ENCODE measurements at regions of chr3 and their contacts with region 1.

Region 1: GRCh38 chr3:127970966-127971592 is 56.0 kb downstream of the KBTBD12 start:
- ATAC-seq: peak; percentile 86 to 98 (median 94)
- H3K4me3 ChIP-seq: no peak overlapping the region
- H3K27ac ChIP-seq: no peak overlapping the region
- H3K4me1 ChIP-seq: no peaks in the 10 kb centered on the region

Region 2: GRCh38 chr3:127590593-127591477 is 380.2 kb before region 1 on chr3 and contains the start of gene TPRA1:
- in situ Hi-C with region 1: loop called in 1 of 9 experiments (anchors 25 kb)
- ATAC-seq: peak; percentile 70 to 87 (median 82)
- H3K4me3 ChIP-seq: peak within 1 kb of the TSS; percentile 57 to 83 (median 76)
- H3K27ac ChIP-seq: peak within 1 kb of the TSS; percentile 84 to 90
- H3K4me1 ChIP-seq: peaks cover 8 to 16% of the 10 kb centered on the region in 2 donors
- total RNA-seq, gene TPRA1: 16.2 to 59.1 (median 25.3) TPM

Region 3: GRCh38 chr3:127697551-127698240 is 273.4 kb before region 1 on chr3:
- in situ Hi-C with region 1: loop called in 1 of 9 experiments (anchors 25 kb)
- ATAC-seq: peak; percentile 69 to 95 (median 88)
- H3K4me3 ChIP-seq: no peak overlapping the region
- H3K27ac ChIP-seq: no peak overlapping the region
- H3K4me1 ChIP-seq: peaks cover 0 to 4% of the 10 kb centered on the region in 2 donors

Region 4: DNA sequence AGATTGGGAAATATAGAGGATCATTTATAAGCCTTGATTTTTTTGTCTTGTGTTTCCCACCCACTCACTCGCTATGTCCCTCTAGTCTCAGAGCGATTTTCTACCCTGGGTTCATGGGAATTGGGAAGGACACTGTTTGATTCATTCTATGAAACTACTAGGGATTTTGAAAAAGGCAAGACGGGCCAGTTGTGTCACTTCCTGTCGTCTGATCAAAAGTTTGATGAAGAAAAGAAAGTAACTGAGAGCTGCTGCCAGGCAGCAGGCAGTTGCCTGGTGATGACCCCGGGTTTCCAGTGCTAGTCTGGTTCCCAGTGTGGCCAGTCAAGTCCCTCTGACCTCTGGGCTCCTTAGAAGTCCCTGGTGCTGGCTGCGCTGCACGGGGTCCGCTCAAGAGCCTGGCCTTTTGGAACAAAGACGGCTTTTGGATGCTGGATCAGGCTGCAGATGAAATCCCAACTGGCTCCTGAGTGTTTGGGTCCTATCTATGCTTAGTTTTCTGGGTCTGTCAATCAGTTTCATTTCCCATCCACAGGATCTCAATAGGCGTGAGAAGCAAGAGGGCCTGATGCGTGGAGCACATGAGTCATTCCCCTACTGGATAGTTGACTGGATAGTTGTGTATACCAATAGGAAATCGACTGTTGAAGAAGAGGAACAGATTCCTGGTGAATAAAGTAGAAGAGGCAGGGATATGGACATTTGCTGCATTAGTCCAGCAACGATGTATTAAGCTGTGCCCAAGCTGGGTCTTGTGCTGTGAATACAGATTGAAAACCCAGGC is 271.9 kb after region 1 on chr3:
- in situ Hi-C with region 1: no loop called
- ATAC-seq: no peak
- H3K4me3 ChIP-seq: no peak overlapping the region
- H3K27ac ChIP-seq: no peak overlapping the region
- H3K4me1 ChIP-seq: peaks cover 4 to 26% of the 10 kb centered on the region in 2 donors

Region 5: GRCh38 chr3:128343287-128344051 is 372.4 kb after region 1 on chr3:
- in situ Hi-C with region 1: no loop called
- ATAC-seq: peak; percentile 84 to 98 (median 98)
- H3K4me3 ChIP-seq: no peak overlapping the region
- H3K27ac ChIP-seq: peak overlapping the region in 1 of 2 donors; percentile 65
- H3K4me1 ChIP-seq: peaks cover 0 to 30% of the 10 kb centered on the region in 2 donors